Prostate gland (tissue), 2 donors: ENCODE measurements at regions of chr3 and their contacts with region 1.

Region 1: GRCh38 chr3:194592798-194593752 is 40.1 kb downstream of the TMEM44 start:
- DNase-seq: peak; percentile 89
- H3K4me3 ChIP-seq: no peak overlapping the region
- H3K27ac ChIP-seq: peak overlapping the region in 1 of 2 donors; percentile 34
- H3K4me1 ChIP-seq: peaks cover 7% of the 10 kb centered on the region
- H3K27me3 ChIP-seq: no peaks in the 10 kb centered on the region
- CTCF ChIP-seq: peak in 1 of 4 experiments; percentile 18
- POLR2A ChIP-seq: no peak

Region 2: GRCh38 chr3:194333212-194333980 is 259.7 kb before region 1 on chr3:
- intact Hi-C with region 1: loop called (anchors 10 kb)
- DNase-seq: peak; percentile 85
- H3K4me3 ChIP-seq: peak overlapping the region; percentile 24 to 39
- H3K27ac ChIP-seq: no peak overlapping the region
- H3K4me1 ChIP-seq: peaks cover 5% of the 10 kb centered on the region
- H3K27me3 ChIP-seq: no peaks in the 10 kb centered on the region
- CTCF ChIP-seq: peak; percentile 93 to 99 (median 98)
- POLR2A ChIP-seq: no peak

Region 3: DNA sequence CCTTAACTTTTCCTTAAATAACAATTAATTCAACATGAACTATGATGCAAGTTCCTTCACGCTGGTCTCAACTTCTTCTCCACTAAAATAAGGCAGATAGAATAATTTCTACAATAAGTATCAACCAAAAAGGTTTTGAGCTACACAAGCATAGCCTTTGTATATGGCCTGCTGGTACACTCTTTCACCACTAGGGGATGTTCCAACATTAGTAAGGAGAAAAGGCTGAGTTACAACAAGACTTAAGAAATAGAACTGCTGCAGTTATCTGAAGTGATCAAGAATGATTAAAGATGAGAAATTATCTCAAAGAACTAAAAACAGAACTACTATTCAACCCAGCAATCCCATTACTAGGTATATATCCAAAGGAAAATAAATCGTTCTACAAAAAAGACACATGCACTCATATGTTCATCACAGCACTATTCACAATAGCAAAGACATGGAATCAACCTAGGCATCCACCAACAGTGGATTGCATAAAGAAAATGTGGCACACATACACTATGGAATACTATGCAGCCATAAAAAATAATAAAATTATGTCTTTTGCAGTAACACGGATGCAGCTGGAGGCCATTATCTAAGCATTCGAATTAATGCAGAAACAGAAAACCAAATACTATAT is 120.7 kb before region 1 on chr3:
- intact Hi-C with region 1: loop called (anchors 2 kb)
- DNase-seq: peak; percentile 46
- H3K4me3 ChIP-seq: no peak overlapping the region
- H3K27ac ChIP-seq: no peak overlapping the region
- H3K4me1 ChIP-seq: peaks cover 4% of the 10 kb centered on the region
- H3K27me3 ChIP-seq: no peaks in the 10 kb centered on the region
- CTCF ChIP-seq: peak; percentile 87 to 99 (median 95)
- POLR2A ChIP-seq: no peak